CD4-positive, alpha-beta T cell (primary cell): ENCODE measurements at regions of chr15 and their contacts with region 1.

Region 1: GRCh38 chr15:73273181-73274002 is 95.4 kb downstream of the HCN4 start:
- DNase-seq: peak in 13 of 14 experiments; percentile 5 to 68 (median 32)
- ATAC-seq: peak; percentile 65
- H3K4me3 ChIP-seq: no peak overlapping the region
- H3K4me3 Mint-ChIP-seq: no peak overlapping the region
- H3K27ac ChIP-seq: no peak overlapping the region
- H3K27ac Mint-ChIP-seq: no peak overlapping the region
- H3K4me1 ChIP-seq: no peaks in the 10 kb centered on the region
- H3K4me1 Mint-ChIP-seq: no peaks in the 10 kb centered on the region
- H3K27me3 ChIP-seq: no peaks in the 10 kb centered on the region
- H3K27me3 Mint-ChIP-seq: no peaks in the 10 kb centered on the region
- CTCF ChIP-seq: peak; percentile 72

Region 2: DNA sequence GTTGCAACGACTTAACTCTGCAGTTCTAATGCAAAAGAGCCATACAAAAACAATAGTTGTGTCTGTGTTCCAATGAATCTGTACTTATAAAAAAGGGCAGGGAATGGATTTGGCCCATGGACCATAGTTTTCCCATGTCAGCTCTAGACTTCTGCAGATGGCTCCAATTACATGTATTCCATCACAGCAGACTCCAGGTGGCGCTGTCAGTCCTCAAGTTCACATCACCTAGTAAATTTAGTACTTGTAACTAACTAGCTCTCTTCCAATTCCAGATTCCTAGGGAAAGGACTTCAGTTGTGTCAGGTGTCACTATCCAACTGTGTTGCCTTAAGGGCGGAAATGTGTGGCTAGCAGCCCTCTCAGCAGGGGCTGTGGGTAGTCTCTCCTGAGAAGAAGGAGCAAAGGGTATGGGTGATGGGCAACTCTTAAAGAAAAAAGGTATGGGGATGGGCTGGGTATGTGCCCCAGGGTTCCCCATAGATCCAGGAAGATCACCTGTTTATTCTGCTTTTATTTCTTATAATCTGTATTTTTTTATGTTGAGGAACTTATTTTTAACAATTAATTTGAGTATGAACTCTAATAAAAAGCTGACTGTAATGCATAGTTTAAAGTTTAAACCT is 551.2 kb before region 1 on chr15:
- CTCF ChIA-PET with region 1: interaction called, 4 read pairs
- POLR2A ChIA-PET with region 1: no interaction called
- intact Hi-C with region 1: loop called (anchors 2 kb)
- DNase-seq: peak; percentile 51 to 81 (median 65)
- ATAC-seq: peak; percentile 51
- H3K4me3 ChIP-seq: no peak overlapping the region
- H3K4me3 Mint-ChIP-seq: no peak overlapping the region
- H3K27ac ChIP-seq: no peak overlapping the region
- H3K27ac Mint-ChIP-seq: no peak overlapping the region
- H3K4me1 ChIP-seq: no peaks in the 10 kb centered on the region
- H3K4me1 Mint-ChIP-seq: no peaks in the 10 kb centered on the region
- H3K27me3 ChIP-seq: no peaks in the 10 kb centered on the region
- H3K27me3 Mint-ChIP-seq: no peaks in the 10 kb centered on the region
- CTCF ChIP-seq: peak; percentile 92

Region 3: DNA sequence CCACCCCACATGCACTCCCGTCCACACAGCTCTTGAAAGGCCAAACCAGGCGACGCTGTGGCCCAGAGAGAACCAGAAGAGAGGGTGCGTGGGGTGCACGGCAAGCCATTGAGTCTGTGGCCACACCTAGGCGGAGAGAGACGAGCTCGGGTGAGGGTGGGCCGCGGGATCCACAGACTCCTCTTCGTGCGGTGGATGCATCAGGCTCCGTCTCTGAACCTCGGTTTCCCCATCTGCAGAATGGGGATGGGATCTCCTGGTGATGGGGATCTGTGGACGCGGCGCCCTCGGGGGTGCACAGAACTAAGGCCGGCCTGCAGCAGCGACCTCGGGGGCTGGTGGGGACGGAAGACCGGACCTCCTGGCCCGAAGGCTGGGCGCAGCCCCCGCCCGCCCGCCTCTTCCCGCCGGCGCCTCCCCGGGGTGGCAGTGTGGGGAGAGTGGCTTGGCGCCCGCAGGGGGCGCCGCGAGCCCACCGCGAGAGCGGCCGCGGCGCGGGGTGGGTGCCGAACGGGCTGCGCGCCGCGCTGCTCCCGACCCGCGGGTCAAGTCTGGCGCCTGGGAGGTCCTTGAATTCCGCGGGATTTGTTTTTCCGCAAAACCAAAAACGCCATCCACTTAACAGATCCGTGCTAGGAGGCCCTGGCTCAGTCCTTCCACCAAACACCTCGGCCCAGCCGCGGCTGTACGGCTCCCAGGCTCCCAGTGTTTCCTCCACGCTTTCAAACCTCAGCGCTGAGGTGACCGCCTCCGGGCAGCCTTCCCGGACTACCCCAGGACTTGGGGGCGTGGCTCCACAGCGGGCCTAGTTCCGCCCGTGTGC is 476.7 kb before region 1 on chr15:
- CTCF ChIA-PET with region 1: no interaction called
- POLR2A ChIA-PET with region 1: no interaction called
- intact Hi-C with region 1: loop called in 1 of 2 experiments (anchors 5 kb)
- DNase-seq: peak in 12 of 14 experiments; percentile 17 to 74 (median 38)
- ATAC-seq: peak; percentile 81
- H3K4me3 ChIP-seq: peak overlapping the region; percentile 66
- H3K4me3 Mint-ChIP-seq: peak overlapping the region; percentile 89
- H3K27ac ChIP-seq: no peak overlapping the region
- H3K27ac Mint-ChIP-seq: no peak overlapping the region
- H3K4me1 ChIP-seq: peaks cover 11% of the 10 kb centered on the region
- H3K4me1 Mint-ChIP-seq: peaks cover 10% of the 10 kb centered on the region
- H3K27me3 ChIP-seq: peaks cover 6 to 8% of the 10 kb centered on the region in 2 experiments
- H3K27me3 Mint-ChIP-seq: peaks cover 49% of the 10 kb centered on the region
- CTCF ChIP-seq: peak; percentile 27

Region 4: GRCh38 chr15:73240866-73241499 is 32.4 kb before region 1 on chr15:
- CTCF ChIA-PET with region 1: interaction called, 5 read pairs
- POLR2A ChIA-PET with region 1: no interaction called
- intact Hi-C with region 1: loop called (anchors 2 kb)
- DNase-seq: peak; percentile 41 to 80 (median 66)
- ATAC-seq: peak; percentile 57
- H3K4me3 ChIP-seq: no peak overlapping the region
- H3K4me3 Mint-ChIP-seq: no peak overlapping the region
- H3K27ac ChIP-seq: no peak overlapping the region
- H3K27ac Mint-ChIP-seq: no peak overlapping the region
- H3K4me1 ChIP-seq: no peaks in the 10 kb centered on the region
- H3K4me1 Mint-ChIP-seq: no peaks in the 10 kb centered on the region
- H3K27me3 ChIP-seq: no peaks in the 10 kb centered on the region
- H3K27me3 Mint-ChIP-seq: no peaks in the 10 kb centered on the region
- CTCF ChIP-seq: peak; percentile 90